ENCODE measurements at regions of chr14 and their contacts with region 1.

Region 1: GRCh38 chr14:77067632-77068514 is 30.2 kb upstream of the CIPC start:
- DNase-seq: peak; percentile 48
- ATAC-seq: peak; percentile 66
- H3K4me3 Mint-ChIP-seq: no peak overlapping the region
- H3K27ac Mint-ChIP-seq: no peak overlapping the region
- H3K4me1 Mint-ChIP-seq: peaks cover 28% of the 10 kb centered on the region
- H3K27me3 Mint-ChIP-seq: peaks cover 3% of the 10 kb centered on the region
- CTCF ChIP-seq: no peak

Region 2: DNA sequence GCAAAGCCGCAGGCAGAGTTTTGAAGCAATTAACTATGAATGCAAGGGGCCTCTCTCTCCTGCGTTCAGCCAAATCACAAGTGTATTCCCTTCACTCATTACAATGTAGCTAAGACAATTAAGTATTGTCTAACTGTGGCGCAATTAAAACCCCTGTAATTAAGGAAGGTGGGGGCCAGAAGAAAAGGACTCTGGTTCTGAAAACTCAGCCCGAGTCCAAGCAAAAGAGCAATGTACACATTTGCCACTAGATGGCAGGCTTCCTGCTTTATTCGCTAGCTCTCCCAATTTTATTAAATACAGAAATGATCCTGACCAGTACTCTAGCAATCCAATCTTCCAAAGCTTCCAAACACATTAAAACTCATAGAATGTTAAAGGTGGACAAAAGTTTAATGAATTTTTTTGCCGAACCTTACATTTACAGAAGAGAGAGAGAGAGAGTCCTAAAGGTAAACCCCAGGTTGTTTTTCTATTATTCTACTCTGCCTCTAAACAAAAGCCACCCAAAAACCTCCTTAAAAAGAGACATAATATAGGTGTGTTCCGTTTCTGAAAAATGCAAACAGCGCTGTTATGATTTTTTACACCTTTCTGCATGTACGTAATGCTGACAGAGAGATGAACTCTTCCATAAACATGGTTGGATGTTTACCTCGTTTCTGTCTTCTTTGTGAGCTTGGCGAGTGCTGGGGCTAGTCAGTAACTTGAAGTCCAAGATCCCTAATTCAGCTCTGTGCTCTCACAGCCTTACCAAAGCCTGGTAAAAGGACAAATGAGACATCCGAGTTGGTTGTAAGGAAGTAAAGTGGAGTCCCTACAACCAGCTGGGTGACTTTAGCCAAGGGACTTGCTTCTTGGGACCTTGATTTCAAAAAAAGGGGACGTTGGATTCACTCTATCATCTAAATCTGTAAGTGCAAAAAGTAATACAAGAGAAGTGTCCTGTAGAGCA is 357.5 kb before region 1 on chr14:
- CTCF ChIA-PET with region 1: interaction called, 32 read pairs
- POLR2A ChIA-PET with region 1: no interaction called
- intact Hi-C with region 1: loop called (anchors 1 kb)
- DNase-seq: no peak
- ATAC-seq: no peak
- H3K4me3 Mint-ChIP-seq: no peak overlapping the region
- H3K27ac Mint-ChIP-seq: no peak overlapping the region
- H3K4me1 Mint-ChIP-seq: no peaks in the 10 kb centered on the region
- H3K27me3 Mint-ChIP-seq: peaks cover 11% of the 10 kb centered on the region
- CTCF ChIP-seq: no peak

Region 3: GRCh38 chr14:76881348-76881747 is 186.5 kb before region 1 on chr14:
- CTCF ChIA-PET with region 1: interaction called, 233 read pairs
- POLR2A ChIA-PET with region 1: interaction called, 8 read pairs
- intact Hi-C with region 1: loop called (anchors 1 kb)
- DNase-seq: no peak
- ATAC-seq: no peak
- H3K4me3 Mint-ChIP-seq: no peak overlapping the region
- H3K27ac Mint-ChIP-seq: no peak overlapping the region
- H3K4me1 Mint-ChIP-seq: peaks cover 7% of the 10 kb centered on the region
- H3K27me3 Mint-ChIP-seq: peaks cover 6% of the 10 kb centered on the region
- CTCF ChIP-seq: no peak

Region 4: DNA sequence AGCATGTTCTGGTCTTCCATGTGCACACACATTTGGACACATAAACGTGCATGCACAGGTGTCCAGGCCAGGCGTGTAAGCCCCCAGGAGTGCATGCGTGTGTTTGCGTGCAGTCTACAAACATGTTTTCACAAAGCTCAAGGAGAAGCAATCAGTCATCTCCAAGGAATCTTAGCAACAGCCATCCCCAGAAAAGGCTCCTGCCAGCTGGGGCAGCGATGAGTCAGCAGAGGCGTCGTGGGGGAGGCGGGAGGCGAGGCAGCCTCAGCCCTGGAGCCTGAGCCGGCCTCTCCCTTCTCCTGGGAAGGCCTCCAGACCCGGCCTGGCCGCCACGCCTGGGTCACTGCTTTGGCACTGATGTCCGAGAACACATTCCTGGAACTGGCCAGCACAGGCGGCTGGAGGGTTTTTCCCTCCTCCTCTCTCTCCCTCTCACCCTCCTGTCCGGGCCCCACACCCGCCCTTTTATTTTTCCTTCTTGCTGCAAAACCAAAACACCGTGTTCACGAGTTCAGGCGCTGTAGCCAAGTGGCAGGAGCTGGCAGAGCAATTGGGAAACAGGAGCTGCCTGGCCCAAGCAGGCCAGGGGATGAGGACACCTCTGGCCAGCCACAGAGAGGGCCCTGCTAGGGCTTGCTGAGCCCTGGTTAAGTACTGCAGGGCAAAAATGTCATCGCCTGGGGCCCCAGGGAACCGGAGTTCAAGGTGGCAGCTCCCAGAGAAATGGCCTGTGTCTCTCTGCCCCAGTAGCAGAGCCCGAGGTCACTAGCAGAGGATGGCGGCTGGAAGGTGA is 148.9 kb before region 1 on chr14:
- CTCF ChIA-PET with region 1: interaction called, 101 read pairs
- POLR2A ChIA-PET with region 1: no interaction called
- intact Hi-C with region 1: no loop called
- DNase-seq: no peak
- ATAC-seq: no peak
- H3K4me3 Mint-ChIP-seq: no peak overlapping the region
- H3K27ac Mint-ChIP-seq: no peak overlapping the region
- H3K4me1 Mint-ChIP-seq: peaks cover 25% of the 10 kb centered on the region
- H3K27me3 Mint-ChIP-seq: peaks cover 15% of the 10 kb centered on the region
- CTCF ChIP-seq: no peak

Region 5: GRCh38 chr14:77053046-77053841 is 14.6 kb before region 1 on chr14:
- CTCF ChIA-PET with region 1: interaction called, 13 read pairs
- POLR2A ChIA-PET with region 1: interaction called, 7 read pairs
- intact Hi-C with region 1: loop called (anchors 1 kb)
- DNase-seq: peak; percentile 79
- ATAC-seq: peak; percentile 90
- H3K4me3 Mint-ChIP-seq: no peak overlapping the region
- H3K27ac Mint-ChIP-seq: peak overlapping the region; percentile 24
- H3K4me1 Mint-ChIP-seq: peaks cover 8% of the 10 kb centered on the region
- H3K27me3 Mint-ChIP-seq: no peaks in the 10 kb centered on the region
- CTCF ChIP-seq: peak; percentile 74

Region 6: GRCh38 chr14:77097700-77098528 is 30.0 kb after region 1 on chr14 and contains the start of gene CIPC:
- CTCF ChIA-PET with region 1: interaction called, 27 read pairs
- POLR2A ChIA-PET with region 1: interaction called, 4 read pairs
- intact Hi-C with region 1: loop called (anchors 1 kb)
- DNase-seq: peak; percentile 96
- ATAC-seq: peak; percentile 86
- H3K4me3 Mint-ChIP-seq: peak within 1 kb of the TSS; percentile 99
- H3K27ac Mint-ChIP-seq: peak within 1 kb of the TSS; percentile 98
- H3K4me1 Mint-ChIP-seq: peaks cover 72% of the 10 kb centered on the region
- H3K27me3 Mint-ChIP-seq: no peaks in the 10 kb centered on the region
- CTCF ChIP-seq: no peak
- total RNA-seq, gene CIPC: 26.6 and 28.5 TPM in 2 replicates

Region 7: DNA sequence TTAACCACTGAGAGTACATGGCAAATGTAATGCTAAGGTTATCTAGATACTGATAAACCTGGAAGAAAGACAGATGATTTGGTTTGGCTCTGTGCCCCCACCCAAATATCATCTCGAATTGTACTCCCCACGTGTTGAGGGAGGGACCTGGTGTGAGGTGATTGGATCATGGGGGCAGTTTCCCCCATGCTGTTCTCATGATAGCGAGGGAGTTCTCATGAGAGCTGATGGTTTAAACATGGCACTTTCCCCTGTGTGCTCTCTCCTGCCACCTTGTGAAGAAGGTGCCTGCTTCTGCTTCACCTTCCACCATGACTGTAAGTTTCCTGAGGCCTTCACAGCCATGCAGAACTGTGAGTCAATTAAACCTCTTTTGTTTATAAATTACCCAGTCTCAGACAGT is 341.3 kb after region 1 on chr14:
- CTCF ChIA-PET with region 1: no interaction called
- POLR2A ChIA-PET with region 1: no interaction called
- intact Hi-C with region 1: no loop called
- DNase-seq: no peak
- ATAC-seq: peak; percentile 50
- H3K4me3 Mint-ChIP-seq: no peak overlapping the region
- H3K27ac Mint-ChIP-seq: no peak overlapping the region
- H3K4me1 Mint-ChIP-seq: peaks cover 5% of the 10 kb centered on the region
- H3K27me3 Mint-ChIP-seq: no peaks in the 10 kb centered on the region
- CTCF ChIP-seq: no peak

Measured in activated B cell treated with CpG ODN at 0.5 μM for 24 hours (primary cell).